Posterior vena cava (tissue), 2 donors: ENCODE measurements at regions of chr16 and their contacts with region 1.

Region 1: GRCh38 chr16:11439790-11440656 is 94.8 kb downstream of the RMI2 start:
- DNase-seq: no peak

Region 2: DNA sequence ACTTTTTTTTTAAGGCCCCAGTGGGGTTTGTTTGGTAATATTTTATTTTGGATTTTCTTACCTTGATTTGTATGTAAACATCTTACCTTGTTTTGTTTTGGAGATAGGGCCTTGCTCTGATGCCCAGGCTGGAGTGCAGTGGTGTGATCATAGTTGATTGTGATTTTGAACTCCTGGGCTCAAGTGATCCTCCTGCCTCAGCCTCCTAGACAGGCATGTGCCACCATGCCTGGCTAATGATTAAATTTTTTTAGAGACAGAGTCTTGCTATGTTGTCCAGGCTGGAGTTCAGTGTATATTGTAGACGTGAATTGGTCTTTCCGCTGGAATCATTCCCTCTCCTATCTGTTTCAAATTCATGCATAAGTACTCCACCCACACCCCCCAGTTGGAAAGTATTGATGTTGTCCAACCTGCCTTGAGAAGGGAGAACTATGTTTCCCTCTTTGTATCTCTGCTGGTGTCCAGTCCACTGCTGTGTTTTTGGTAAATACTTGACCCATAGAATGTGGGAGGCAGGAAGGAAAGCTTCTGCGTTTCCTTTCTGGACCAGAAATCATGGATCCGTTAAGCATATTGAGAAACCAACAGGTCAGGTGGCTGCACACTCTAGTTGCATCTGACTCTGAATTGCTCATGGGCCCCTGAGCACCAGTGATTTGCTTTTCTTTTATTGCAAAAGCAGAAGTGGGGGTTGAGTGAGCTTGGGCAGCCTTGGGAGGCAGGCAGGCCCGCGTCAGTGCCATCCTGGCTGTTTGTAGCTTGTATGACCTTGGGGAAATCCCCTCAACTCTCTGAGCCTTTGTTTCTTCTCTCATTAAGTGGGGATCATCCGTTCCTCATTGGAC is 69.7 kb before region 1 on chr16:
- intact Hi-C with region 1: no loop called
- DNase-seq: peak; percentile 71

Region 3: GRCh38 chr16:11478431-11479119 is 38.6 kb after region 1 on chr16:
- intact Hi-C with region 1: loop called in 1 of 2 experiments (anchors 2 kb)
- DNase-seq: peak; percentile 69